Tibial artery (tissue), 4 donors: ENCODE measurements at regions of chr9 and their contacts with region 1.

Region 1: GRCh38 chr9:96418074-96418809 is at the start of gene ZNF367:
- DNase-seq: peak; percentile 98 to 99
- H3K4me3 ChIP-seq: peak within 1 kb of the TSS; percentile 67 to 75
- H3K27ac ChIP-seq: peak within 1 kb of the TSS; percentile 95 to 98
- H3K4me1 ChIP-seq: peaks cover 11 to 34% (median 25%) of the 10 kb centered on the region in 4 donors
- H3K27me3 ChIP-seq: no peaks in the 10 kb centered on the region
- CTCF ChIP-seq: peak in 1 of 2 experiments; percentile 4

Region 2: GRCh38 chr9:96654443-96655197 is 236.4 kb after region 1 on chr9:
- intact Hi-C with region 1: loop called (anchors 2 kb)
- DNase-seq: peak; percentile 83 to 95
- H3K4me3 ChIP-seq: peak overlapping the region; percentile 66 to 82
- H3K27ac ChIP-seq: peak overlapping the region; percentile 99 to 100
- H3K4me1 ChIP-seq: peaks cover 0 to 20% (median 6%) of the 10 kb centered on the region in 4 donors
- H3K27me3 ChIP-seq: no peaks in the 10 kb centered on the region
- CTCF ChIP-seq: peak in 1 of 2 experiments; percentile 44